Natural killer cell (primary cell): ENCODE measurements at regions of chr17 and their contacts with region 1.

Region 1: GRCh38 chr17:63697341-63698286 is 2.3 kb downstream of the LIMD2 start:
- DNase-seq: peak; percentile 79 to 94
- ATAC-seq: peak; percentile 28 to 59 (median 32)
- H3K4me3 ChIP-seq: peak overlapping the region; percentile 78
- H3K4me3 Mint-ChIP-seq: peak overlapping the region; percentile 96
- H3K27ac ChIP-seq: peak overlapping the region; percentile 80
- H3K27ac Mint-ChIP-seq: peak overlapping the region; percentile 91 to 97
- H3K4me1 ChIP-seq: peaks cover 64% of the 10 kb centered on the region
- H3K4me1 Mint-ChIP-seq: peaks cover 63 to 70% of the 10 kb centered on the region in 2 donors
- H3K27me3 ChIP-seq: no peaks in the 10 kb centered on the region
- H3K27me3 Mint-ChIP-seq: no peaks in the 10 kb centered on the region
- CTCF ChIP-seq: peak; percentile 76

Region 2: DNA sequence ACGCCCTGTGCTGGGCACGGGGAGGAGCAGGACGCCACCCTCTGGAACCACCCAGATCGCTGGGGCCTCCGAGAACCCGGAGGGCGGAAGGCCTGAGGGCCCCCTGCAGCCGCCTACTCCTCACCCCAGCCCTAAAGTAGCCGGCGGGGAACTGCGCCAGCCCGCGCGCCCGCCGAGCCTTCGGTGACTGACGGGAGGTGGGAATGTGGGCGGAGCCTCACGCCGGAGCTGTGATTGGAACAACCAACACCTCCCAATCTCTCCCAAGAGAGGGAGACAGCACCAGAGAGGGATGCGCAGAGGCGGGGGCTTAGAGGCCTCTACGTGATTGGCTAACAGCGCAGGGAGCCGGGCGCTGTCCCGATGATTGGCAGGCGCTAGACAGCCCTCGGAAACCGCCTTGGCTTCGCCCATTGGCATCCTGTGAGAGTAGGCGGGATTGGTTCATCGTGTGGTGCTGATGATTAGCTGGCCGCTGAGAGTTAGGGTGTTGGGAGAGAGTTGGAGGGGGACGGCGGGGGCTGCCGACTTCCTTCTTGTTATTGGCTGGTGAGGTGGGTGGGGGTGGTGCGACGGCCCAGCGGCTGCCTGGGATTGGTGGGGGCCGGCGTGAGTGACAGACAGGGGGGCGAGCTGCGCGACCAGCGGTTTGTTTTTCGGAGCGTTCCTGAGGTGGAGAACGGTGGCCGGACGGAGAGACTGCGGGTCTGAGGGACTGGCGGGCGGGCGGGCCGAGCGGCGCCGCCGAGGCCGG is 75.7 kb before region 1 on chr17 and contains the start of gene MAP3K3:
- intact Hi-C with region 1: loop called (anchors 5 kb)
- DNase-seq: peak; percentile 92 to 99
- ATAC-seq: peak; percentile 88 to 97 (median 88)
- H3K4me3 ChIP-seq: peak within 1 kb of the TSS; percentile 72
- H3K4me3 Mint-ChIP-seq: peak within 1 kb of the TSS; percentile 99
- H3K27ac ChIP-seq: peak within 1 kb of the TSS; percentile 68
- H3K27ac Mint-ChIP-seq: peak within 1 kb of the TSS; percentile 83 to 91
- H3K4me1 ChIP-seq: peaks cover 13% of the 10 kb centered on the region
- H3K4me1 Mint-ChIP-seq: peaks cover 36 to 43% of the 10 kb centered on the region in 2 donors
- H3K27me3 ChIP-seq: no peaks in the 10 kb centered on the region
- H3K27me3 Mint-ChIP-seq: no peaks in the 10 kb centered on the region
- CTCF ChIP-seq: no peak
- total RNA-seq, gene MAP3K3: 82.0 to 89.2 (median 88.5) TPM

Region 3: GRCh38 chr17:63741221-63742049 is 43.8 kb after region 1 on chr17 and contains the start of gene STRADA:
- intact Hi-C with region 1: loop called (anchors 1 kb)
- DNase-seq: peak; percentile 96 to 99
- ATAC-seq: peak; percentile 94 to 99 (median 94)
- H3K4me3 ChIP-seq: peak within 1 kb of the TSS; percentile 77
- H3K4me3 Mint-ChIP-seq: peak within 1 kb of the TSS; percentile 94
- H3K27ac ChIP-seq: peak within 1 kb of the TSS; percentile 81
- H3K27ac Mint-ChIP-seq: peak within 1 kb of the TSS; percentile 96 to 97
- H3K4me1 ChIP-seq: peaks cover 22% of the 10 kb centered on the region
- H3K4me1 Mint-ChIP-seq: peaks cover 25 to 27% of the 10 kb centered on the region in 2 donors
- H3K27me3 ChIP-seq: no peaks in the 10 kb centered on the region
- H3K27me3 Mint-ChIP-seq: no peaks in the 10 kb centered on the region
- CTCF ChIP-seq: no peak
- total RNA-seq, gene STRADA: 72.6 to 83.1 (median 78.2) TPM

Region 4: DNA sequence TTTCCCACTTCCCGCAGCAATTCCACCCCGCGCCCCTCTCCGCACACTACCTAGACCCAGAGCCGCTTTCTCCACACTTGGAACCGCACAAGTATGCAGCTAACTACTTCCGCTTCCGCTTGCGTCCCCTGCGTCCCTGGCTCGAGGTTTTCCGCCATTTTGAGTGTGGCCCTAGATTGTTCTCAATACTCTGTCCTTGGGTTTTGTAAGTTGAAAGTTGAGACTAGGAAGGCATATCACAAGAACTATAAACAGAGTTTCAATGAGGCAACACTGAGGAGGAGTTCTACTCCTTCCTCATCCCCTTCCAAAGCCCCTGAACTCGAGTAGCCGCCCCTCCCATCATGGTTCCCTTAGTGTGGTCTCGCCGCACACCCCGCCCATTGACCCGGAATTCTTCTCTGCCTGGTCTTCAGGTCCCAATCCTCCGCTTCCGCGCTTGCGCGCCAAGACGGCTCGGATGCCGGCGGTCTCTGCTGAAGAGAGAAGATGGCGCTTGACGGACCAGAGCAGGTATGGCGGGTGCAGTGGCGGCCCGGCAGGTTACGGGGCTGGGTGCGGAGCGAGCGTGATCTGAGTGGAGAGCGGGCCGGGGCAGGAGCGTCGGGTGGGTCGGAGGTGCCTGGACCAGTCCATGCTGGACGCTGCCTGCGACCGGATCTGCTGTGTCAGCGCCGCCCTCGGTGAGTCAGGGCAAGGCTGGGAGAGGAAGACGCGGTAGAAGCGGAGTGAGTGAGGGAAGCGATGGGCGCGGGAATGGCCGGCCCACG is 129.6 kb after region 1 on chr17 and contains the starts of genes FTSJ3 and PSMC5:
- intact Hi-C with region 1: loop called (anchors 2 kb)
- DNase-seq: peak; percentile 89 to 98
- ATAC-seq: peak; percentile 89 to 97 (median 93)
- H3K4me3 ChIP-seq: peak within 1 kb of the TSS; percentile 78
- H3K4me3 Mint-ChIP-seq: peak within 1 kb of the TSS; percentile 99
- H3K27ac ChIP-seq: peak within 1 kb of the TSS; percentile 91
- H3K27ac Mint-ChIP-seq: peak within 1 kb of the TSS; percentile 96 to 99
- H3K4me1 ChIP-seq: peaks cover 35% of the 10 kb centered on the region
- H3K4me1 Mint-ChIP-seq: peaks cover 30 to 55% of the 10 kb centered on the region in 2 donors
- H3K27me3 ChIP-seq: no peaks in the 10 kb centered on the region
- H3K27me3 Mint-ChIP-seq: no peaks in the 10 kb centered on the region
- CTCF ChIP-seq: peak; percentile 47
- total RNA-seq, gene FTSJ3: 35.2 to 53.5 (median 51.6) TPM
- total RNA-seq, gene PSMC5: 91.3 to 114 (median 100) TPM

Region 5: GRCh38 chr17:63911657-63912426 is 214.2 kb after region 1 on chr17:
- intact Hi-C with region 1: no loop called
- DNase-seq: peak; percentile 60 to 83
- ATAC-seq: peak; percentile 80 to 98 (median 92)
- H3K4me3 ChIP-seq: no peak overlapping the region
- H3K4me3 Mint-ChIP-seq: no peak overlapping the region
- H3K27ac ChIP-seq: no peak overlapping the region
- H3K27ac Mint-ChIP-seq: no peak overlapping the region
- H3K4me1 ChIP-seq: peaks cover 6% of the 10 kb centered on the region
- H3K4me1 Mint-ChIP-seq: peaks cover 5% of the 10 kb centered on the region in 2 donors
- H3K27me3 ChIP-seq: no peaks in the 10 kb centered on the region
- H3K27me3 Mint-ChIP-seq: peaks cover 0 to 5% of the 10 kb centered on the region in 2 donors
- CTCF ChIP-seq: peak; percentile 79